Activated T-helper 1 cell treated with anti-CD3 and anti-CD28 coated beads, Interleukin-12 subunit alpha, Interleukin-12 subunit beta, Interleukin-2, Interleukin-4 antibody, amounts not matched to agents 30 ng/mL and 10 ng/mL and 1 ng/mL, durations not matched to agents 14 hours and 24 hours and 36 hours (primary cell): ENCODE measurements at regions of chr11 and their contacts with region 1.

Region 1: DNA sequence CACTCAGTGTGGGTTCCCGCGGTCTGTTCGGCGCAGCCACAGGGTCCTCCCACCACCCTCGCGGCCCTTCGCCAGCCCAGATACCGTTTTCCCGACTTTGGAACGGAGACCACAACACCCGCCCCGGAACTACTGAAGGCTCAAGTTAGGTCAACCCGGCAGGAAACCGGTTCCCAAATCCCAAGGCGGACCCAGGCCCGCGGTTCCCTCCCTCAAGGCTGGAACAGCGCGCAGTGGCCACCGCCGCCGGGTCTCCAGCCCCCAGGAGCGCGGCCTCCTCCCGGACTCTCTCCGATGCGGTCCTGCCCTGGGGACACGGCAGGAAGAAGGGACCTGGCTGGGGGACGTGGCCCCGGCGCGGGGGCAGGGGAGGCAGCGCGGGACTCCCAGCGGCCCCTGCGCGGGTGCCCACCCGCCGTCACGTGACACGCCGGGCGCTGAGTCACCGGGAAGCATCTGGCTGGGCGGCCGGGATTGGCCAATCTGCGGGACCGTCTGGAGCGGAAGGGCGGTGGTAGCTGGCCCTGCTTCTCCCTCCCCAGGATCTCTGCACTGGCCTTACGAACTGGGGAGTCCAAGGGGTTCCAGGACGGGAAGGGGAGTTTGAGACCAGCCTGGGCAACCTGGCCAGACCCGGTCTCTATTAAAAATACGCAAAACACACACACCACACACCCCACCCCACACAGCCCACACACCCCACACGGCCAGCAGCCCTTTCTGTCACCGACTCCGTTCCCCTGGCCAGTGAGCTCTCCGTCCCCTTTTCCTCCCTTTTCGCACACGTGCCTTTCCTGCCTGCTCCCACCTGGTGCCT is 21.5 kb upstream of the MALAT1 start:
- DNase-seq: peak; percentile 89
- H3K4me3 Mint-ChIP-seq: peak overlapping the region; percentile 99
- H3K27ac Mint-ChIP-seq: peak overlapping the region; percentile 100
- H3K4me1 Mint-ChIP-seq: peaks cover 9% of the 10 kb centered on the region
- H3K27me3 Mint-ChIP-seq: peaks cover 4% of the 10 kb centered on the region

Region 2: GRCh38 chr11:65418711-65419459 is 58.5 kb before region 1 on chr11:
- intact Hi-C with region 1: loop called (anchors 2 kb)
- DNase-seq: peak; percentile 88
- H3K4me3 Mint-ChIP-seq: peak overlapping the region; percentile 99
- H3K27ac Mint-ChIP-seq: peak overlapping the region; percentile 100
- H3K4me1 Mint-ChIP-seq: peaks cover 57% of the 10 kb centered on the region
- H3K27me3 Mint-ChIP-seq: peaks cover 9% of the 10 kb centered on the region

Region 3: DNA sequence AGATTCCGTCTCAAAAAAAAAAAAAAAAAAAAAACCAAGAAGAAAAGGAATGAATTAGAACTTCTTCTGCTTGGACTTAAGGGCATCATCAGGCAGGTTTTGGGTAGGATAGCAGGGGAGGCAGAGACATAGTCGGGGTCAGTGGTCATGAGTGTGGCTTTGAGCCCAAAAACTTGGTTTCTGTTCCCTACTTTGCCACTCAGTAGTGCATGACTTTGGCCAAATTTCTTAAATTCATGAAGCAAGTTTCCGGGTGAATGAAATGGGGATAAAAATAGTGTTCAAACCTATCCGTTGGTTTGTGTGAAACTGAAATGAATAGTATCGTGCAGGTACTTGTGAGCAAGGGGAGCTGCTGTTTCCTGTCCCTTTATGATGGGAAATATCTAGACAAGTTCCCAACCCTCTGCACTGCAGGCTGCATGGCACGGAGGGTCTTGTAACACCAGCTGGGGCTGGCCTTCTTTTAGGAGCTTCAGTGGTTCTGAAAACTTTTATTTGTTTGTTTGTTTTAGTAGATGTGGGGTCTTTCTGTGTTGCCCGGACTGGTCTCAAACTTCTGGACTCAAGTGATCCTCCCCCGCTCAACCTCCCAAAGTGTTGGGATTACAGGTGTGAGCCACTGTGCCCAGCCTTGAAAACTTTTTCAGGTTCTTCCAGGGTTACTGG is 36.4 kb before region 1 on chr11:
- intact Hi-C with region 1: loop called (anchors 1 kb)
- DNase-seq: no peak
- H3K4me3 Mint-ChIP-seq: peak overlapping the region; percentile 22
- H3K27ac Mint-ChIP-seq: peak overlapping the region; percentile 91
- H3K4me1 Mint-ChIP-seq: peaks cover 62% of the 10 kb centered on the region
- H3K27me3 Mint-ChIP-seq: peaks cover 2% of the 10 kb centered on the region

Region 4: DNA sequence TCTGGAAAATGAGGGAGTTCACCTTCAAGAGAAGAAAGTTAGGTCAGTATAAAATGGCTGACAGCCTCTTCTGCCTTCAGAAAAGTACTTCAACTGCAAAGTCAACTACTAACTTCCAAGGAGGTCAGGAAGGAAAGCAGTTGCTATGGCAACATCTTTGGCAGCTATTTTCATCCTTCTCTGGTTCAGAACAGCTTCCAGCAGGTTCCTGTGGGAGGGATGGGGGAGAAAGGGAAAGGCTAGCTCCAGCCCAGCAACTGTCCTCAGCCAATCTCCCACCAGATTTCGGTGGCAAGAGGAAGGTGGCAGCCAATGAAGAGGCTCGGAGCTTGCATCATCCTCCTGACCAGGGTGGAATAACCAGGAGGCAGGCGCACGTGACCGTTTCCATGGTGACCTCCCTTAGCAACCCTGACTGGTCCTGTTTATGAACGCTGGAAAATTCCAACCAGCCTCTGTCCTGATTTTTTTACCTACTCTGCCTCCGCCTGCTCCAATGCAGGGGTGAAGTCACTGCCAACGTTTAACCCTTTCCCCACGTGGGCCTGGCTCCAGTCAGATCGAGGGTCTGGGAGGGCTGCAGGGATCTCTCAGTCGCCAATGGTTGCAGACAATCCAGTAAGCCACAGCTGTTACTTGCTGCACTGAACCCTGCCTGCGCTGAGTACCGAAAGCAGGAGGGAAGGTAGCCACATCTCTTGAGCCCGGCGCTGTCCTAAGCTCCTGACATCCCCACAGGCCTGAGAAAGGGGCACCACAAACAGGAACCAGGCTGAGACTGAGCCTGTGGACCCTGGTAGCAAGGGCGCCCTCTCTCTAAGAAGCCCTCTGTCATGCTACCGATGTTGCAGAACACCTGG is 10.3 kb after region 1 on chr11:
- intact Hi-C with region 1: loop called (anchors 1 kb)
- DNase-seq: no peak
- H3K4me3 Mint-ChIP-seq: peak overlapping the region; percentile 47
- H3K27ac Mint-ChIP-seq: peak overlapping the region; percentile 85
- H3K4me1 Mint-ChIP-seq: peaks cover 48% of the 10 kb centered on the region
- H3K27me3 Mint-ChIP-seq: no peaks in the 10 kb centered on the region

Region 5: GRCh38 chr11:65506770-65507505 is 29.6 kb after region 1 on chr11:
- intact Hi-C with region 1: loop called (anchors 2 kb)
- DNase-seq: peak; percentile 31
- H3K4me3 Mint-ChIP-seq: no peak overlapping the region
- H3K27ac Mint-ChIP-seq: peak overlapping the region; percentile 72
- H3K4me1 Mint-ChIP-seq: peaks cover 56% of the 10 kb centered on the region
- H3K27me3 Mint-ChIP-seq: no peaks in the 10 kb centered on the region